ENCODE measurements at regions of chr18 and their contacts with region 1.

Region 1: GRCh38 chr18:72107647-72108383 is 436.3 kb downstream of the CBLN2 start:
- DNase-seq: peak; percentile 64
- ATAC-seq: peak; percentile 94
- H3K4me3 ChIP-seq: no peak overlapping the region
- H3K27ac ChIP-seq: no peak overlapping the region
- H3K4me1 ChIP-seq: peaks cover 4% of the 10 kb centered on the region; the same call in 1 of the 2 replicates
- H3K27me3 ChIP-seq: no peaks in the 10 kb centered on the region
- CTCF ChIP-seq: no peak

Region 2: GRCh38 chr18:71529703-71530303 is 578.0 kb before region 1 on chr18:
- CTCF ChIA-PET with region 1: no interaction called
- POLR2A ChIA-PET with region 1: no interaction called
- intact Hi-C with region 1: loop called (anchors 10 kb)
- DNase-seq: peak; percentile 96
- ATAC-seq: peak; percentile 85
- H3K4me3 ChIP-seq: no peak overlapping the region
- H3K27ac ChIP-seq: peak overlapping the region; percentile 29
- H3K4me1 ChIP-seq: peaks cover 22% of the 10 kb centered on the region
- H3K27me3 ChIP-seq: no peaks in the 10 kb centered on the region
- CTCF ChIP-seq: no peak; the same call in 1 of the 2 replicates

Region 3: GRCh38 chr18:72235422-72235821 is 127.6 kb after region 1 on chr18:
- CTCF ChIA-PET with region 1: no interaction called
- POLR2A ChIA-PET with region 1: no interaction called
- intact Hi-C with region 1: loop called (anchors 10 kb)
- DNase-seq: peak; percentile 74
- ATAC-seq: peak; percentile 99
- H3K4me3 ChIP-seq: no peak overlapping the region
- H3K27ac ChIP-seq: no peak overlapping the region
- H3K4me1 ChIP-seq: 0 out of 2 replicates have a peak, but pooled peaks cover 4% of the 10 kb centered on the region
- H3K27me3 ChIP-seq: no peaks in the 10 kb centered on the region
- CTCF ChIP-seq: no peak

Measured in PC-3 (cell line).